ENCODE measurements at regions of chr3 and their contacts with region 1.

Region 1: GRCh38 chr3:197224034-197224444 is 74.4 kb downstream of the DLG1 start:
- DNase-seq: peak; percentile 68
- H3K4me3 ChIP-seq: no peak overlapping the region
- H3K27ac ChIP-seq: no peak overlapping the region
- H3K4me1 ChIP-seq: peaks cover 0 to 14% of the 10 kb centered on the region in 2 experiments; a peak in 2 of 4 replicates
- H3K27me3 ChIP-seq: no peaks in the 10 kb centered on the region
- CTCF ChIP-seq: peak; percentile 75
- EP300 ChIP-seq: no peak
- RAD21 ChIP-seq: peak; percentile 84

Region 2: GRCh38 chr3:197242784-197243432 is 18.9 kb after region 1 on chr3:
- CTCF ChIA-PET with region 1: interaction called, 13 read pairs
- POLR2A ChIA-PET with region 1: no interaction called
- DNase-seq: no peak
- H3K4me3 ChIP-seq: no peak overlapping the region
- H3K27ac ChIP-seq: no peak overlapping the region
- H3K4me1 ChIP-seq: no peaks in the 10 kb centered on the region
- H3K27me3 ChIP-seq: no peaks in the 10 kb centered on the region
- CTCF ChIP-seq: no peak
- EP300 ChIP-seq: no peak
- RAD21 ChIP-seq: no peak

Region 3: GRCh38 chr3:197456261-197457091 is 232.4 kb after region 1 on chr3:
- CTCF ChIA-PET with region 1: interaction called, 17 read pairs
- POLR2A ChIA-PET with region 1: no interaction called
- DNase-seq: no peak
- H3K4me3 ChIP-seq: no peak overlapping the region
- H3K27ac ChIP-seq: no peak overlapping the region
- H3K4me1 ChIP-seq: peaks cover 0 to 8% of the 10 kb centered on the region in 2 experiments; a peak in 1 of 4 replicates
- H3K27me3 ChIP-seq: no peaks in the 10 kb centered on the region
- CTCF ChIP-seq: no peak
- EP300 ChIP-seq: no peak
- RAD21 ChIP-seq: no peak

Region 4: DNA sequence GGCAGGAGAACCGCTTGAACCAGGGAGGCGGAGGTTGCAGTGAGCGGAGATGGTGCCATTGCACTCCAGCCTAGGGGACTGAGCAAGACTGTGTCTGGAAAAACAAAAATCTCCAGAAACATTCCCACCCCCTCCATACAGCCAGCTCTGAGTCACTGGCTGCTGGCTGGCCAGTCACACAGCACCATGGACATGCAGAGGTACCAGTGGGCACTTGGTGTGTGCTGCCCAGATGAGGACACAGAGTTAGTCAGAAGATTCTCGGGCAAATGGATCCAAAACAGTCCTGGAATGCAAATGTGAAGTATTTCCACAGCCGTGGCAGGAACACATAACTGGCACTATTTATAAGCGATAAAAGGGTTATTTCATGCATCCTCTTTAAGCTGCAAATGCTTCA is 287.1 kb after region 1 on chr3:
- CTCF ChIA-PET with region 1: interaction called, 52 read pairs
- POLR2A ChIA-PET with region 1: no interaction called
- DNase-seq: no peak
- H3K4me3 ChIP-seq: no peak overlapping the region
- H3K27ac ChIP-seq: peak overlapping the region in 1 of 2 experiments; percentile 68; a peak in 2 of 4 replicates
- H3K4me1 ChIP-seq: peaks cover under 1 to 17% of the 10 kb centered on the region in 2 experiments; a peak in 2 of 4 replicates
- H3K27me3 ChIP-seq: no peaks in the 10 kb centered on the region
- CTCF ChIP-seq: no peak
- EP300 ChIP-seq: no peak
- RAD21 ChIP-seq: no peak

Region 5: DNA sequence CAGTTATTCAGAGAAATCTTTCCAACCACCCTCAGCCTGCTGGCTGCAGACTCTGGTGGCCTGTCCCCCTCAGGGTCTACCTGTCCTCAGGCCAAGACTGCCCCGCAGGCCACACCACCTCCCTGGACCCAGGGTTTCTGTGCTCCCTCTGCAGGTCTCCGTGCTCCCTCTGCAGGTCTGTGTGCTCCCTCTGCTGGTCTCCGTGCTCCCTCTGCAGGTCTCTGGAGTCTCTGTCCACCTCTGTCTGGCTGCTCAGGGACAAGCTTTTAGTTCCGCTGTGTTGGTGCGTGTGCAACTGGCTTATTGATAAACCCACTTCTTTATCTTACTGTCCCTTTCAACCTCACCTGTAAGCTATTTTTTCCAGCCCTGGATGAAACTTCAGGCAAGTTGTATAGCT is 301.7 kb after region 1 on chr3:
- CTCF ChIA-PET with region 1: interaction called, 12 read pairs
- POLR2A ChIA-PET with region 1: no interaction called
- DNase-seq: no peak
- H3K4me3 ChIP-seq: no peak overlapping the region
- H3K27ac ChIP-seq: no peak overlapping the region
- H3K4me1 ChIP-seq: peaks cover 4 to 49% of the 10 kb centered on the region in 2 experiments; a peak in 3 of 4 replicates
- H3K27me3 ChIP-seq: no peaks in the 10 kb centered on the region
- CTCF ChIP-seq: peak; percentile 44
- EP300 ChIP-seq: no peak
- RAD21 ChIP-seq: peak; percentile 49

Measured in SK-N-SH (cell line).